Left ventricle myocardium superior (tissue), 1 donor: ENCODE measurements at regions of chr3 and their contacts with region 1.

Region 1: GRCh38 chr3:32733631-32734229 is 48.7 kb downstream of the CNOT10 start:
- DNase-seq: no peak
- ATAC-seq: no peak

Region 2: DNA sequence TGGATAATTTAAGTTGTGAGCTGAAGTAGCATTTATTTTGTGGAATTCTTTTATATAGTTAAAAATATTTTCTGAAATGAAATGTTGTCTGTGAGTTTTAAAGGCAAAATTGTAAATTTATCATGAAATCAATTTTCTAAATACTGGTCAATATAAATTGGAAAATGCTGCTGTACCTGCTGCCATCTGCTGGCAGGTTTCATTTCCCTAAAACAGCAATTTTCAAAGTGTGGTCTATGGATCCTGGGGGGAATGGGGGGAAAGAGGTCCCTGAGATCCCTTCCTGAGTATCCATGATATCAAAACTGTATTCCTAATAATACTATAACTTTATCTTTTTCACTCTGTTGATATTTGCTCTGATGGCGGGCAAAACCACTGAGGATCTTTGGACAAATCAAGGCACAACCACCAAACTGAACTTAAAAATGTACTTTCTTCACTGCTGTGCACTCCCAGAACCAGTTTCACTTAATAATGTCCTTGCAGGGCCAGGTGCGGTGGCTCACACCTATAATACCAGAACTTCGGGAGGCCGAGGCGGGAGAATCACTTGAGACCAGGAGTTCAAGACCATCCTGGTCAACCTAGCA is 200.5 kb after region 1 on chr3:
- intact Hi-C with region 1: loop called (anchors 5 kb)
- DNase-seq: no peak
- ATAC-seq: no peak